HepG2 (cell line): ENCODE measurements at regions of chr6 and their contacts with region 1.

Region 1: DNA sequence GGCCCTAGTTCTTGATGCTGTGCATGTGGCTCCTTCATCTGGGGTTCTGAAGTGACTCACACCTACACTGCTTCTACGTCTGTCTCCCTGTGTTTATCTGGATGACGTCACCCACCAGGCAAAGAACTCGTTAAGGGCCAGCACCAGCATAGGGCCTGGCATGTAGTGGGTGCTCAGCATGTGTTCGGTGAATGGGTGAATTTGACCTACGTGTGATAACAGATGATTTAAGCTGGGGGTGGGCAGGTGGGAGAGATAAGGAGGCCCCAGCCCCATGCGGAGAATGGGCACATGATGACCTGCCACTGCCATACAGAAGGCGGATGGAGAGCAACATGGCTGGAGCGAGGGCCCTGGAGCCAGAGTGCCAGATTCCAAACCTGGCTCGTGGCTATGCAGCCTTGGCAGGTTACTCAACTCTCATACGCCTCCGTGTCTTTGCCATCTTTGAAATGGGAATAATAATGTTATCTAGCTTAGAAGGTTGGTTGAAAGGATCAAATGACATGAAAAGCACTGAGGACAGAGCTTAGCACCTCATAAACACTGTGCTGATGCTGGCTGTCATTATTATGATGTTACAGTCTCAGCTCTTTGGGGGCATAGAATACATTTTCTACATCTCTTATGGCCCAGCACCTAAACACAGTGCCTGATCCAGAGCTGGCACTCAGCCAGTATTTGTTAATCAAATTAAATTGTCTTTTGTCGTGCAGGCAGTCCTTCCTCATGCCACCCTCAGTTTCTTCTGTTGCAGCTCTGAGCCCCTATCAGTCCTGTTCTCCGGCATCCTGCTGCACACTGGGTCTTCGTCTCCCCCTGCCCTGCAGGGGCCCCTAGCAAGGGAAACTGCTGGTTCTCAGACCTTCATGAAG is 39.6 kb downstream of the VEGFA start:
- DNase-seq: peak; percentile 45
- ATAC-seq: no peak
- H3K4me3 ChIP-seq: no peak overlapping the region
- H3K27ac ChIP-seq: no peak overlapping the region
- H3K4me1 ChIP-seq: peaks cover 83% of the 10 kb centered on the region
- H3K27me3 ChIP-seq: no peaks in the 10 kb centered on the region; a peak in 2 of 5 replicates
- CTCF ChIP-seq: no peak
- EP300 ChIP-seq: no peak
- POLR2A ChIP-seq: no peak
- RAD21 ChIP-seq: no peak

Region 2: GRCh38 chr6:43786664-43787329 is 22.9 kb before region 1 on chr6:
- CTCF ChIA-PET with region 1: no interaction called
- POLR2A ChIA-PET with region 1: interaction called, 18 read pairs
- in situ Hi-C with region 1: no loop called
- intact Hi-C with region 1: no loop called
- DNase-seq: no peak
- ATAC-seq: peak; percentile 12
- H3K4me3 ChIP-seq: no peak overlapping the region
- H3K27ac ChIP-seq: no peak overlapping the region
- H3K4me1 ChIP-seq: no peaks in the 10 kb centered on the region
- H3K27me3 ChIP-seq: peaks cover 0 to 5% of the 10 kb centered on the region in 2 experiments; a peak in 3 of 5 replicates
- CTCF ChIP-seq: no peak
- EP300 ChIP-seq: no peak
- POLR2A ChIP-seq: peak in 1 of 2 experiments; percentile 52; a peak in 1 of 4 replicates
- RAD21 ChIP-seq: no peak

Region 3: GRCh38 chr6:43798688-43799444 is 10.8 kb before region 1 on chr6:
- CTCF ChIA-PET with region 1: no interaction called
- POLR2A ChIA-PET with region 1: interaction called, 14 read pairs
- in situ Hi-C with region 1: no loop called
- intact Hi-C with region 1: no loop called
- DNase-seq: peak; percentile 83
- ATAC-seq: peak; percentile 80
- H3K4me3 ChIP-seq: peak overlapping the region in 1 of 3 experiments; percentile 19; a peak in 1 of 6 replicates
- H3K27ac ChIP-seq: no peak overlapping the region
- H3K4me1 ChIP-seq: peaks cover 84% of the 10 kb centered on the region
- H3K27me3 ChIP-seq: peaks cover 2 to 13% of the 10 kb centered on the region in 2 experiments; a peak in 1 of 5 replicates
- CTCF ChIP-seq: peak; percentile 21; the same call in 1 of the 2 replicates
- EP300 ChIP-seq: peak in 1 of 2 experiments; percentile 67; a peak in 1 of 4 replicates
- POLR2A ChIP-seq: no peak
- RAD21 ChIP-seq: no peak

Region 4: DNA sequence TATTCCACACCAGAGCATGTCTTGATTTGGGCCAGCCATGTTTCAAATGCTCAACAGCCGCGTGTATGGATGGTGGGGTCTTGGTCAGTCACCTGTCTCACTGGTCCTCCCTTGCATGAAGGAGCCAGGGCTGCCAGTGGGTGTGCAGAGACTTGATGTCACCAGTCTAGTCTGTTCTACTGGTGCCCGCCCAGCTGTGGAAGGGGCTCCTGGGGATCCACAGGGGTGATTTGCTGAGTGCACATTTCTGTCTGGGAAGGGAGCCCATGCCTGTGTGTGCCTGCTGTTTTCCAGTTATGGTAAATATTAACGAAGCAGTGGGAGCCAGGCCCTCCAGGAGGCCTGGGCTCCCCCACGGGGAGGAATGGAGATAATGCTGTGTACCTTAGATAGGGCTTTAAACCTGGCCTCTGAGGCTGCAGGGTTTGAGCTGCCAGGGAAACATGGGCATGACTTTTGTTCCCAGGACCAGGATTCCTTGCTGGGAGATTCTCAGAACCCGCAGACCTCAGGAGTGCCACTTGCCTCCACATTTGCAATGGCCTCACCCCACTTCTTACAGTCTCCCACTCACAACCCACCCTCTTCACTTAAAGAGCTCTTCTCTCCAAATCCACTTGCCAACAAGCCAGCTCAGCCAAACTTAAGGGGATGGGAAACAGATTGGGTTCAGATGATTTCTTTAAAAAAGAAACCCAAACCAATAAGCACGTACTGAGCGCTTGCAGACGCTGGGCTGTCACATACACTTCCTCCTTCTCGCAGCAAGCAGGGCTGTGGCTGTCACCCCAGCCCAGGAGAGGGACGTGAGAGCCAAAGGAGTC is 14.4 kb after region 1 on chr6:
- CTCF ChIA-PET with region 1: no interaction called
- POLR2A ChIA-PET with region 1: interaction called, 15 read pairs
- in situ Hi-C with region 1: no loop called
- intact Hi-C with region 1: no loop called
- DNase-seq: peak; percentile 81
- ATAC-seq: peak; percentile 96
- H3K4me3 ChIP-seq: peak overlapping the region in 2 of 3 experiments; percentile 19 to 55; a peak in 3 of 6 replicates
- H3K27ac ChIP-seq: no peak overlapping the region
- H3K4me1 ChIP-seq: peaks cover 68% of the 10 kb centered on the region
- H3K27me3 ChIP-seq: peaks cover 2 to 19% of the 10 kb centered on the region in 2 experiments; a peak in 3 of 5 replicates
- CTCF ChIP-seq: peak; percentile 55
- EP300 ChIP-seq: peak in 1 of 2 experiments; percentile 51; a peak in 1 of 4 replicates
- POLR2A ChIP-seq: no peak
- RAD21 ChIP-seq: peak; percentile 64

Region 5: GRCh38 chr6:44116641-44117382 is 307.2 kb after region 1 on chr6:
- CTCF ChIA-PET with region 1: no interaction called
- POLR2A ChIA-PET with region 1: no interaction called
- in situ Hi-C with region 1: no loop called
- intact Hi-C with region 1: no loop called
- DNase-seq: no peak
- ATAC-seq: peak; percentile 26; the same call in 2 of the 3 replicates
- H3K4me3 ChIP-seq: no peak overlapping the region
- H3K27ac ChIP-seq: peak overlapping the region; percentile 58
- H3K4me1 ChIP-seq: peaks cover 100% of the 10 kb centered on the region
- H3K27me3 ChIP-seq: no peaks in the 10 kb centered on the region
- CTCF ChIP-seq: no peak
- EP300 ChIP-seq: 0 out of 4 replicates have a peak, but pooled peaks of 1 of the 2 experiments have one; percentile 27
- POLR2A ChIP-seq: no peak
- RAD21 ChIP-seq: no peak

Region 6: DNA sequence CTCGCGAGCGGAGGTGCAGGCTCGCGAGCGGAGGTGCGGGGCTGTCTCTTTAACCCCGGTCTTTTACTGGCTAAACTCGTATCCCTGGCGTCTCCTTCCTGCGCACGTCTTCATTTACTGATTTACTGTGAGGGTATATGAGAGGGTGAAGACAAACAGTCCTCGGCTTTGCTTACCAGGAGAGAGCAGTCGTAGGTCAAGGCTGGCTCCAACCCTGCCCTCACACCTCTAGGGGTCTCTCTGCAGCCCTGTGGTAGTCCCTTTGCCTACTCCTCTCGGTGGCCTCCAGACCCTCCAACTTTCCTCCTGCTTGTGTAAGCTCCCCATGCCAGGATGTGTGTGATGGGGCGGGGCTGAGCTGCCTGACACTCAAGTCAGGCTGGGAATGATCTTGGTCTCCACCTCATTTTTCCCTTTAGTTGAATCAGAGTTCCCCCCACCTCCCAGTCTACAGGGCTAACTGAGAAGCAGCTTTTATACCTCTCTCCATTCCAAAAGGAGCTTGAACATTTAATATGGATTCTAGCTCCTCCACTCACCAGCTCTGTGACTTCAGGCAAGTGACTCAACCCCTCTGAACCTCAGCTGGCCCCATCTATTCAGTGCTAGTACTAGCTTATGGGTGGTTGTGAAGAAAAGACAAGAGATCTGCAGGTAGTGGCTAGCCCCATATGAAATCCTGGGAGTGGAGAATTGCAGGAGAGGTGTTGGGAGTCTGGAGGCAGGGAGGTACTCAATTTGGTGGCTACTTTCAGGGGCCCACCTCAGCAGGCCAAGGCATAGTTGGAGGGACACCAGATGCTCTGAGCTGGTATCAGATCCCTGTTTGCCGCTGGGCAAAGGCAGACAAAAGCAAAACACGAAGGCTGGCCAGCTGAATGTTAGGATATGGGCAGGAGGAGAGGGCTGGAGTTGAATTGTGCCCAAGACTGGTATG is 414.6 kb after region 1 on chr6:
- CTCF ChIA-PET with region 1: no interaction called
- POLR2A ChIA-PET with region 1: no interaction called
- in situ Hi-C with region 1: no loop called
- intact Hi-C with region 1: no loop called
- DNase-seq: no peak
- ATAC-seq: peak; percentile 15
- H3K4me3 ChIP-seq: peak overlapping the region; percentile 54 to 76 (median 56)
- H3K27ac ChIP-seq: peak overlapping the region; percentile 19
- H3K4me1 ChIP-seq: peaks cover 80% of the 10 kb centered on the region
- H3K27me3 ChIP-seq: 0 out of 5 replicates have a peak, but pooled peaks cover 0 to 1% of the 10 kb centered on the region in 2 experiments
- CTCF ChIP-seq: 0 out of 2 replicates have a peak, but pooled peaks have one; percentile 2
- EP300 ChIP-seq: no peak
- POLR2A ChIP-seq: no peak
- RAD21 ChIP-seq: no peak